Activated CD4-positive, alpha-beta memory T cell treated with anti-CD3 and anti-CD28 coated beads, Interleukin-2, amount 10 ng/mL, durations not matched to agents 7 days and 5 days (primary cell): ENCODE measurements at regions of chr6 and their contacts with region 1.

Region 1: DNA sequence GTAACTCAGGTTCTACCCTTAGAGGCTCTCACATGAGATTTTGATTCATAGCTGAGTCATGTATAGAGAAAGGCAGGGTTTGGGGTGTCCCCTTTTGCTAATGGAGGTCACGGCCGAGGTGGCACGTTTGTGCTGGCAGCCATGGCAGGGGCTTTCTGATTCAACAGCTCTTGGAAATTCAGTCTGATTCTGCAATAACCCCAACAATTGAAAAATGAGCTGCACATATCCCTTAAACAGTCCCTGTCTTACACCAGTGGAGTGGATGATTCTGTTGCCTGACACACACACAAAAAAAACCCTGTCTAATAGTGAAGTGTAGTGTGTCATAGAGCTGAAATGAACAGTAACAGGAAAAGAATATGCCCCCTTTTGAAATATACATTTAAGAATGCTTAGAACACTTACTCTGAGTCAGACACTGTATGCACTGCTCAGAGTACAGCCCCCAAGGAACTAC is 40.4 kb upstream of the ARG1 start:
- DNase-seq: peak; percentile 33
- H3K4me3 Mint-ChIP-seq: no peak overlapping the region
- H3K27ac Mint-ChIP-seq: no peak overlapping the region
- H3K4me1 Mint-ChIP-seq: peaks cover 34% of the 10 kb centered on the region
- H3K27me3 Mint-ChIP-seq: no peaks in the 10 kb centered on the region

Region 2: GRCh38 chr6:129981598-129981997 is 1551.0 kb before region 1 on chr6:
- CTCF ChIA-PET with region 1: no interaction called
- POLR2A ChIA-PET with region 1: no interaction called
- DNase-seq: no peak
- H3K4me3 Mint-ChIP-seq: no peak overlapping the region
- H3K27ac Mint-ChIP-seq: no peak overlapping the region
- H3K4me1 Mint-ChIP-seq: no peaks in the 10 kb centered on the region
- H3K27me3 Mint-ChIP-seq: no peaks in the 10 kb centered on the region

Region 3: GRCh38 chr6:130885392-130886192 is 647.0 kb before region 1 on chr6:
- CTCF ChIA-PET with region 1: interaction called, 32 read pairs
- POLR2A ChIA-PET with region 1: interaction called, 3 read pairs
- DNase-seq: peak; percentile 72
- H3K4me3 Mint-ChIP-seq: no peak overlapping the region
- H3K27ac Mint-ChIP-seq: no peak overlapping the region
- H3K4me1 Mint-ChIP-seq: no peaks in the 10 kb centered on the region
- H3K27me3 Mint-ChIP-seq: no peaks in the 10 kb centered on the region

Region 4: DNA sequence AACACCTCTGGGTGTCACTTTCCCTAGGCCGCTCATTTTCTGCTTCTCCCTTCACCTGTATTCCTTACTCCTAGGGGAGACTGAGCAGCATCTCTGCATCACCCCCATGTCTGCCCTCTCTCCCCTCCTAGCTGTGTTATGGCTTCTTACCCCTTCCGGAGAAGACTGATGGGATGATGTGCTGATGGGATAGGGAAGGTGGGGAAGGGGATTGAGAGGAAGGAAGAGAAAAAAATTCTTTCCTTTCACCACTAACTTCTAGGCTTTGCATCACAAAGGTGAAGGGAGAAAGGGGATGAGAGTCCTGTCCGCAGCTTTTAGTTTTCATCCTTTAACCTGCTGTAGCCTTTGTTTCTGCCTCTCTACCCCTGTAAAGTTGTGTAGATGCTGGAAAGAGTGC is 370.6 kb before region 1 on chr6:
- CTCF ChIA-PET with region 1: interaction called, 10 read pairs
- POLR2A ChIA-PET with region 1: no interaction called
- DNase-seq: no peak
- H3K4me3 Mint-ChIP-seq: no peak overlapping the region
- H3K27ac Mint-ChIP-seq: no peak overlapping the region
- H3K4me1 Mint-ChIP-seq: no peaks in the 10 kb centered on the region
- H3K27me3 Mint-ChIP-seq: no peaks in the 10 kb centered on the region

Region 5: DNA sequence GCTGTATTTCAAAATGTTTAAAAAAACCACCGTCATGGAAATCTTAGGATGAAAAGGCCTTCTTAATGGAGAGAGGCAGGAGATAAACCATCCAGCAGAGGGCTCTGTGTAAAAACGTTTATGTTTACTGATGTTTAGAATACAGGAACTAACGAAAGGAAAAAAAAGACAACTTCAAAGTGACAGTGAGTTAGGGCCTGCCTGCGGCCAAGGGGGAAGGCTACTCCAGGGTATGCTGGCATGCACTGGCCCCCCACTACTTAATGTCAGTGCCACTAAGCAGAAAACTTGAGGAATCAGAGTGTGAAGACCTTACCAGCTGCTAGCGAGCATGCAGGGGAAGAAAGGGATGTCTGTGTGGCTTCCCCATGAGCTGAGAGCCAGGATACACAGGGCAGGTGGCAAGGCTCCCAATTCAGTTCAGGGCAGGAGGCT is 349.6 kb before region 1 on chr6:
- CTCF ChIA-PET with region 1: interaction called, 44 read pairs
- POLR2A ChIA-PET with region 1: interaction called, 5 read pairs
- DNase-seq: peak; percentile 26
- H3K4me3 Mint-ChIP-seq: no peak overlapping the region
- H3K27ac Mint-ChIP-seq: peak overlapping the region; percentile 81
- H3K4me1 Mint-ChIP-seq: peaks cover 6% of the 10 kb centered on the region
- H3K27me3 Mint-ChIP-seq: no peaks in the 10 kb centered on the region

Region 6: DNA sequence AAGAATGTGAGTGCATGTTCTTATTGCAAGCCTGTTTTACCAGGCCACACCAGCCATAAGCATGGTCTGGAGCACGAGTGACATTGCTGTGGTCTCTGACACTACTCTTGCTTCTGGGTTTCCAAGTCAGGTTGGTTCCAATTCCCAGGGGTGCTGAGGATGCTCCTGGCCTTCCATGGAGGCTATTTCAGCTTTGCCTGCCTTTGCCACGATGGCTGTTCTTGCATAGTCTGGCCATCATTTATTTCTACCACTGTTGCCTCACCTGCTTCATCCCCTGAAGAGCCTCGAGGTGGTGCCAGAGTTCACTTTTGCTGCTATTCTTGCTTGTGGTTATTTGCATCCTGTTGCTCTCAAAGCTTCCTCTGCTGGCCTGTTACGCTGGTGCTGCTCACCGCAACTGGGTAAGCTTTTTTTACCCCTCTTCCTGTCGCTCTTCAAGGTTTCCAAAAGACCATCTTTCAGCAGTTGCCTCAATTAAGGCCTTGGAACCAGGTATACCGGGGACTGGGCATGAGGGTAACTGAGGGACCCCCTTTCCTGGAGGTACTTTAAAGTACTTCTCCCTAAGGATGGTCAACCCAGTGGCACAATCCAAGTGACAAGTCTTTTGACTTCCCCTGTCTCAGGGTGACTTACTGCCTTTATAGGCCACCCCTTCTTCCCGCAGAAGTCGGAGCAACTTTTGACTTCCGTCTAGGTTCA is 332.9 kb before region 1 on chr6:
- CTCF ChIA-PET with region 1: interaction called, 81 read pairs
- POLR2A ChIA-PET with region 1: interaction called, 36 read pairs
- DNase-seq: peak; percentile 84
- H3K4me3 Mint-ChIP-seq: peak overlapping the region; percentile 75
- H3K27ac Mint-ChIP-seq: peak overlapping the region; percentile 94
- H3K4me1 Mint-ChIP-seq: peaks cover 54% of the 10 kb centered on the region
- H3K27me3 Mint-ChIP-seq: no peaks in the 10 kb centered on the region

Region 7: GRCh38 chr6:131451321-131452144 is 81.1 kb before region 1 on chr6:
- CTCF ChIA-PET with region 1: no interaction called
- POLR2A ChIA-PET with region 1: no interaction called
- DNase-seq: no peak
- H3K4me3 Mint-ChIP-seq: no peak overlapping the region
- H3K27ac Mint-ChIP-seq: no peak overlapping the region
- H3K4me1 Mint-ChIP-seq: no peaks in the 10 kb centered on the region
- H3K27me3 Mint-ChIP-seq: no peaks in the 10 kb centered on the region

Region 8: GRCh38 chr6:131519670-131520436 is 12.8 kb before region 1 on chr6:
- CTCF ChIA-PET with region 1: interaction called, 32 read pairs
- POLR2A ChIA-PET with region 1: interaction called, 6 read pairs
- DNase-seq: peak; percentile 50
- H3K4me3 Mint-ChIP-seq: no peak overlapping the region
- H3K27ac Mint-ChIP-seq: no peak overlapping the region
- H3K4me1 Mint-ChIP-seq: peaks cover 11% of the 10 kb centered on the region
- H3K27me3 Mint-ChIP-seq: peaks cover 6% of the 10 kb centered on the region